ENCODE measurements at regions of chr2 and their contacts with region 1.

Region 1: GRCh38 chr2:222307143-222307756 is 8.5 kb upstream of the PAX3 start:
- DNase-seq: peak in 1 of 2 experiments; percentile 65
- H3K4me3 ChIP-seq: peak overlapping the region in 1 of 4 experiments; percentile 50; a peak in 4 of 8 replicates
- H3K27ac ChIP-seq: no peak overlapping the region
- H3K4me1 ChIP-seq: peaks cover 9 to 36% (median 21%) of the 10 kb centered on the region in 4 experiments
- H3K27me3 ChIP-seq: peaks cover 98 to 100% (median 99%) of the 10 kb centered on the region in 4 experiments
- CTCF ChIP-seq: no peak
- EP300 ChIP-seq: no peak
- POLR2A ChIP-seq: no peak
- RAD21 ChIP-seq: 0 out of 4 replicates have a peak, but pooled peaks of 1 of the 2 experiments have one; percentile 4

Region 2: DNA sequence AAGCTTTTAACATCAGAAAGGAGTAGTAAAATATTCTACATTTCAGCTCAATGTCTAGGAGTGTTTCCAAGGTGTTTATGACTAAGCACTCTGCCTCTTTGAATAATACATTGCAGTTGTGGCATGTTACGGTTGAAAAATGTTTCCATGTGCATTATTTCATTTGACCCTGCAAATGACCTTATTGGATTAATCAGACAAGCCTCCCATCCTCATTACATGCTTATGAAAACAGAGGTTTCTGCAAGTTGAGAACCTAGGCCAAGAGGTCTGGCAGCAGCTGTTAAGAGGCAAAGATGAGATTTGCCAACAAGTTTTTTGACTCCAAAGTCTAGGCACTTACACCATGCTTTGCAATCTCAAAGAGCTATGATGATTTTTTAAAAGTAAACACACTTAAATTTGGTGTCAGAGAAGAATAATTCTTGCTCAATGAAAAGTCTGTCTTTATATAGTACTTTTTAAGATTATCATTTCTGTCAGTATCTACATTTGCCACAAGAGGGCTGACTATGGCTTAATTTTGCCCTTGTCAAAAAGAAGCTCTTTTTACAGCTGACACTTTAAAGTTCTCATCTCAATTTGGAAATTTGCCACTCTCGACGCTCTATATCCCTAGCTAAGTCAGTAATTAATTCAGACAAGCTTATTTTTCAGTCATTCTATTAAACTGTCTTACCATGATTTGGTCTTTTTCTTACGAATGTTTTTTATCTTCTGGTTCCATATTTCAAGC is 269.0 kb before region 1 on chr2:
- CTCF ChIA-PET with region 1: interaction called, 10 read pairs
- POLR2A ChIA-PET with region 1: no interaction called
- DNase-seq: no peak
- H3K4me3 ChIP-seq: no peak overlapping the region
- H3K27ac ChIP-seq: no peak overlapping the region
- H3K4me1 ChIP-seq: no peaks in the 10 kb centered on the region
- H3K27me3 ChIP-seq: peaks cover 0 to 4% (median 1%) of the 10 kb centered on the region in 4 experiments; a peak in 3 of 7 replicates
- CTCF ChIP-seq: peak in 2 of 3 experiments; percentile 24 to 41; a peak in 2 of 4 replicates
- EP300 ChIP-seq: no peak
- POLR2A ChIP-seq: no peak
- RAD21 ChIP-seq: peak; percentile 59 to 61

Region 3: DNA sequence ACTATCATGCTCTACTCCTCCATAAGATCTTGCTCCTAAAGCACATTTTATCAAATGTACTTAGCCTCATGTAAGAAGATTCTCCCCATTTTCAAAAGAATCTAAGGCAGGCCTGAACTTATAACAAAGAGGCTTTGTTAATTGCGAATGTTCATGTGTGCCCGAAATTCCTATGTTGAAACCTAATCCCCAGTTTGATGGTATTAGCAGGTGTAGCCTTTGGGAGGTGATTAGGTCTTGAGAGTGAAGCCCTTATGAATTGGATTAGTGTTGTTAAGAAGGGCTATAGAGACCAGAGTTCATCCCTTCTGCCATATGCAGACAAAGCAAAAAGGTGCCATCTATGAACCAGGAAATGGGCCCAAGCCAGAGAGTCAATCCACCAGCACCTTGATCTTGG is 243.0 kb before region 1 on chr2:
- CTCF ChIA-PET with region 1: no interaction called
- POLR2A ChIA-PET with region 1: no interaction called
- DNase-seq: no peak
- H3K4me3 ChIP-seq: no peak overlapping the region
- H3K27ac ChIP-seq: no peak overlapping the region
- H3K4me1 ChIP-seq: no peaks in the 10 kb centered on the region
- H3K27me3 ChIP-seq: no peaks in the 10 kb centered on the region
- CTCF ChIP-seq: no peak
- EP300 ChIP-seq: no peak
- POLR2A ChIP-seq: no peak
- RAD21 ChIP-seq: no peak

Region 4: GRCh38 chr2:222290736-222291484 is 16.3 kb before region 1 on chr2:
- CTCF ChIA-PET with region 1: interaction called, 9 read pairs
- POLR2A ChIA-PET with region 1: interaction called, 11 read pairs
- DNase-seq: peak; percentile 69 to 86
- H3K4me3 ChIP-seq: peak overlapping the region; percentile 16 to 56 (median 30); a peak in 6 of 8 replicates
- H3K27ac ChIP-seq: no peak overlapping the region
- H3K4me1 ChIP-seq: peaks cover 13 to 29% (median 20%) of the 10 kb centered on the region in 4 experiments
- H3K27me3 ChIP-seq: peaks cover 66 to 97% (median 84%) of the 10 kb centered on the region in 4 experiments
- CTCF ChIP-seq: peak in 1 of 3 experiments; percentile 19; a peak in 1 of 4 replicates
- EP300 ChIP-seq: peak in 1 of 2 experiments; percentile 10; a peak in 1 of 3 replicates
- POLR2A ChIP-seq: no peak
- RAD21 ChIP-seq: peak; percentile 20 to 21; a peak in 2 of 4 replicates

Region 5: GRCh38 chr2:222318026-222318711 is 10.9 kb after region 1 on chr2:
- CTCF ChIA-PET with region 1: interaction called, 10 read pairs
- POLR2A ChIA-PET with region 1: interaction called, 3 read pairs
- DNase-seq: peak in 1 of 2 experiments; percentile 89
- H3K4me3 ChIP-seq: peak overlapping the region; percentile 41 to 62 (median 52); a peak in 7 of 8 replicates
- H3K27ac ChIP-seq: no peak overlapping the region
- H3K4me1 ChIP-seq: peaks cover 0 to 9% (median under 1%) of the 10 kb centered on the region in 4 experiments; a peak in 5 of 7 replicates
- H3K27me3 ChIP-seq: peaks cover 66 to 91% (median 79%) of the 10 kb centered on the region in 4 experiments
- CTCF ChIP-seq: peak in 2 of 3 experiments; percentile 17 to 33; a peak in 2 of 4 replicates
- EP300 ChIP-seq: no peak
- POLR2A ChIP-seq: no peak
- RAD21 ChIP-seq: peak; percentile 51 to 59